K562 (cell line): ENCODE measurements at regions of chr5 and their contacts with region 1.

Region 1: GRCh38 chr5:1021136-1021968 is 12.8 kb downstream of the NKD2 start:
- DNase-seq: no peak
- ATAC-seq: no peak; the same call in 2 of the 3 replicates
- H3K4me3 ChIP-seq: no peak overlapping the region
- H3K27ac ChIP-seq: no peak overlapping the region
- H3K4me1 ChIP-seq: no peaks in the 10 kb centered on the region; a peak in 2 of 5 replicates
- H3K27me3 ChIP-seq: peaks cover 40 to 48% of the 10 kb centered on the region in 2 experiments
- CTCF ChIP-seq: no peak
- EP300 ChIP-seq: no peak
- POLR2A ChIP-seq: no peak
- RAD21 ChIP-seq: no peak

Region 2: DNA sequence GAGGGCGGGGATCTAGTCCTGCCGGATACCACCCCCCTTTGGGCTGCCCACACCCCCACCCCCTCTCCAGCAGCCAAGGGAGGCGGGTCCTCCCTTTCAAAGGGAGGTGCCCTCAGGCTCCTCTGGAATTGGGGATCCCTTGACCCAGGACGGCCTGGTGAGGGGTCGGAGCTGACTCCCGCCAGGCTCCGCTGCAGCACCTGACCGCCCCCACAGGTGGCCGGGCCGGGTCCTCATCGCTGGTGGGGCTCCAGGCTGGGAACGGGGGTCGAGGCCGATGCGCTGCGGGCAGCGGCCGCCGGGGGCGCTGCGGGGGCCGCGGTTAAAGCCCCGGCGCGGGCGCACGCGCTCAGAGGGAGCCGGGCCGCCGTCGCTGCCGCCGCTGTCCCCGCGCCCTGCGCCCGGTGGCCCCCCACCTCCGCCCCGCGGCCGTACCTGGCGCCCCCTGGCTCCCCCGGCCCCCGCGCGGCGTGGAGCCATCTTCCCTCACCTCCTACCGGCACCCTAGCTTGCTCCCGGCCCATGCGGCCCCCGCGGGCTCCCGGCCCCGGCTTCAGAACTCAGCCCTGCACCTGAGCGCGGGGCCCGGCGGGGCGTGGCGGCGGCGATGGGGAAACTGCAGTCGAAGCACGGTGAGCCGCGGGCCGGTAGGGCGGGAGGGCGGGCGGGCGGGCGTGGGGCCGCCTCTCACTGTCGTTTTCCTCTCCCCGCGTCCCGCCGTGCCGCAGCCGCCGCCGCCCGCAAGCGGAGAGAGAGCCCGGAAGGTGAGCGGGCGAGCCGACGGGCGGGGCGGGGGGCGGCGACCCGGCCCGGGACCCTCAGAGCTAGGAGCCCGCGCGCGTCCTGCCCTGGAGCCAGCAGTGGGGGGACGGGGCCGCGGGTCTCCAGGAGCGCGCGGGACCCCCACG is 12.6 kb before region 1 on chr5 and contains the start of gene NKD2:
- CTCF ChIA-PET with region 1: no interaction called
- POLR2A ChIA-PET with region 1: interaction called, 10 read pairs
- in situ Hi-C with region 1: no loop called
- intact Hi-C with region 1: no loop called
- DNase-seq: peak; percentile 53 to 92 (median 87)
- ATAC-seq: peak; percentile 63
- H3K4me3 ChIP-seq: no peak within 1 kb of the TSS; the same call in 1 of the 2 replicates
- H3K27ac ChIP-seq: no peak within 1 kb of the TSS
- H3K4me1 ChIP-seq: peaks cover 0 to 54% of the 10 kb centered on the region in 2 experiments; a peak in 3 of 5 replicates
- H3K27me3 ChIP-seq: peaks cover 41 to 84% of the 10 kb centered on the region in 2 experiments
- CTCF ChIP-seq: peak; percentile 52 to 72 (median 54); a peak in 5 of 6 replicates
- EP300 ChIP-seq: no peak
- POLR2A ChIP-seq: no peak
- RAD21 ChIP-seq: no peak; a peak in 1 of 4 replicates
- polyA plus RNA-seq, gene NKD2: not detected

Region 3: GRCh38 chr5:1068204-1068894 is 47.0 kb after region 1 on chr5:
- CTCF ChIA-PET with region 1: no interaction called
- POLR2A ChIA-PET with region 1: no interaction called
- in situ Hi-C with region 1: no loop called
- intact Hi-C with region 1: no loop called
- DNase-seq: peak in 1 of 4 experiments; percentile 45
- ATAC-seq: peak; percentile 50
- H3K4me3 ChIP-seq: no peak overlapping the region
- H3K27ac ChIP-seq: no peak overlapping the region
- H3K4me1 ChIP-seq: peaks cover 14 to 48% of the 10 kb centered on the region in 2 experiments; a peak in 4 of 5 replicates
- H3K27me3 ChIP-seq: peaks cover 0 to 38% of the 10 kb centered on the region in 2 experiments; a peak in 3 of 5 replicates
- CTCF ChIP-seq: no peak
- EP300 ChIP-seq: no peak
- POLR2A ChIP-seq: no peak
- RAD21 ChIP-seq: no peak

Region 4: GRCh38 chr5:1291611-1292080 is 270.3 kb after region 1 on chr5:
- CTCF ChIA-PET with region 1: no interaction called
- POLR2A ChIA-PET with region 1: no interaction called
- in situ Hi-C with region 1: no loop called
- intact Hi-C with region 1: no loop called
- DNase-seq: no peak
- ATAC-seq: no peak
- H3K4me3 ChIP-seq: no peak overlapping the region
- H3K27ac ChIP-seq: no peak overlapping the region
- H3K4me1 ChIP-seq: peaks cover 0 to 60% of the 10 kb centered on the region in 2 experiments; a peak in 2 of 5 replicates
- H3K27me3 ChIP-seq: peaks cover 9 to 51% of the 10 kb centered on the region in 2 experiments; a peak in 4 of 5 replicates
- CTCF ChIP-seq: no peak
- EP300 ChIP-seq: no peak
- POLR2A ChIP-seq: no peak
- RAD21 ChIP-seq: no peak